ENCODE measurements at regions of chr15 and their contacts with region 1.

Region 1: GRCh38 chr15:78909791-78910228 is 35.0 kb downstream of the CTSH start:
- DNase-seq: no peak

Region 2: GRCh38 chr15:78979456-78980320 is 69.9 kb after region 1 on chr15:
- intact Hi-C with region 1: loop called in 1 of 2 experiments (anchors 2 kb)
- DNase-seq: no peak

Region 3: GRCh38 chr15:79028411-79028964 is 118.7 kb after region 1 on chr15:
- intact Hi-C with region 1: loop called in 1 of 2 experiments (anchors 5 kb)
- DNase-seq: peak; percentile 67

Region 4: DNA sequence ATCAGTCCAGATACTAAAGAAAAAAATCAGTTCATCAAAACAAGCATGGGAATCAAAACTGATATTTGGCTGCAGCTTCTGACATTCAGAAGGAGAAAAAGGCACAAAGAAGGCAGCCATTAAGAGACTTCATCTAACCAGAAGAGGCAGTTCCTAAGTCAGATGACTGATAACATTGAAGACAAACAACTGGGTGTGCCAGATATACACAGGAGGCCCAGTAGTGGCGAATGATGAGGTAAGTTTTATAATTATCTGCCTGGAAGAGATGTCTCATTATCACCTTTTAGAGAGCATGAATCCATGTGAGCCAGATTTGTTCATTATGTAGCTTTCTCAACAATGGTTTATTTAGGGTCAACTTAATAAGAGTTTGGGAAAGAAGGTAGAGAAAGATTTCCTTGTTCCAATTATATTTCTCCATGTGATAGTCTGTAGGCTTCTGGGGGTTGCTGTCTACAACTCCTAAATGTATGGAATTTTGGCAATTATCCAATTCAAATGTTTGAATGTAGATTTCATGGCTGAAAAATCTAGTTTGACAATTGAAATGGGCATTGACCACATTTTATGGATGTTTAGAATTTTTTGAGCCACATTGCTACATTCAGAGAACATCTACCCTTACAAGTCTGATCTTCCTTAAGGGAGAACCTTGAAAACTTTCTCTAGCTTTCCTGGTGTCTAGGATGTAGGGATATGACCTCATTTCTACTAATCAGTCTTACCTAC is 231.2 kb after region 1 on chr15:
- intact Hi-C with region 1: no loop called
- DNase-seq: no peak

Region 5: GRCh38 chr15:79184465-79184892 is 274.7 kb after region 1 on chr15:
- intact Hi-C with region 1: loop called in 1 of 2 experiments (anchors 10 kb)
- DNase-seq: peak; percentile 93

Measured in posterior vena cava (tissue), 2 donors.